Lower leg skin (tissue), 4 donors: ENCODE measurements at regions of chr17 and their contacts with region 1.

Region 1: DNA sequence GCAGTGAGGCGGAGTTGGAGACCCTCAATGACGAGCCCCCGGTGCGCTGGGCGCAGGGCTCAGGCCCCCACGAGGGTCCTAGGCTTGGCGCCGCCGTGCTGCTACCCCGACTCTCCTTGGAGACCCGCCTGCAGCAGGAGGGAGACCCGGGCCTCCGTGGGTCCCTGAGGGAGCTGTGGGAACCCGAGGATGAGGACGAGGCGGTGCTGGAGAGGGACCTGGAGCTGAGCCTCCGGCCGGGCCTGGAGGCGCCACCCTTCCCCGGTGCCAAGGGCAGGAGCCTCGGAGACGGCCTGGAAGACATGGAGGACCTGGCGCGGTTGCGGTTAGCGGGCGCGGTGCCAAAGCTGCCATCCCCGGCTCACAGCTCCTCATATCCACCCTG is 2.3 kb downstream of the MYO15B start:
- DNase-seq: no peak
- H3K4me3 ChIP-seq: no peak overlapping the region
- CTCF ChIP-seq: no peak
- POLR2A ChIP-seq: no peak

Region 2: GRCh38 chr17:75428543-75429469 is 161.1 kb before region 1 on chr17:
- intact Hi-C with region 1: loop called (anchors 5 kb)
- DNase-seq: no peak
- H3K4me3 ChIP-seq: no peak overlapping the region
- CTCF ChIP-seq: no peak
- POLR2A ChIP-seq: no peak